Cardiac septum (tissue), 1 donor: ENCODE measurements at regions of chr7 and their contacts with region 1.

Region 1: GRCh38 chr7:127585044-127585953 is at the start of gene GCC1:
- DNase-seq: peak; percentile 96
- total RNA-seq, gene GCC1: 6.8 TPM

Region 2: DNA sequence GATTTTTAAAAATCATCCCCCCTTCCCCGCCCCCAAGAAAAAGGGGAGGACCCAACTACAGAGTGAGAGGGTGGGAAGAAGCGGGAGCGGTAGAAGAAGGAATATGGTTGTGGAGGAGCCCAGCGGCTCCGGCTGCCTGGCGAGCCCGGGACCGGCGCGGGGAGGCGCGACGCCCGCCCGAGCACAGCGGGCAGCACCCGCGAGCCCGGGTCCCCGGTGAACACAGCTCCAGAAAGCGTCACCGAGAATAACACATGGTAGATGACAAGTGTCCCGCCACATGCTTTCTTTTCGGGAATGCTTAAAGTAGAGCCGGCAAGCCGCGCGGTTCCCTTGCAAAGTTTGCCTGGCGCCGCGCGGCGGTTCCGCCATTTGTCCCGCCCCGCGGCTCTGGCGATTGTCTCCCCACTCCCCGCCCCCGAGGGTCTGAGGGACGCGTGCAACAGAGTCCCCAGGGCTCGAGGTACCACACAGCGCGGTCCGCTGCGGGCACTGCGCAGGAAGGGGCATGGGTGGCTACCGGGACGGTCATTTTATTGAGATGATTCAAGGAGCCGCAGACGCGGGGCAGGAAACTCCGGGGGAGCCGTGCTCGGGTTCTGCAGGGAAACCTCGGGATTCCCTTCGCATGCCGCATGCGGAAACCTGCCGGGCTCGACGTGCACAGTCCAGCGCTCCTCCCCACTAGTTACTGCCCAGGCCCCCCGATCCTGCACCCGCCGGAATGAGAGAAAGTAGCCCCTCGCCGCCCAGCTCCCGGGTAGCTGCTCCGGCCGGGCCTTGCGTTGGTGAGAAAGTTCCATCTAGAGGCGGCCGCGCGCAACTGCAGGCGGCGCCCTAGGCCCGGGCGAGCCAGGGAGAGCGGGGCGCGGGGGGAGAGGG is 331.8 kb before region 1 on chr7:
- intact Hi-C with region 1: loop called (anchors 5 kb)
- DNase-seq: peak; percentile 77

Region 3: DNA sequence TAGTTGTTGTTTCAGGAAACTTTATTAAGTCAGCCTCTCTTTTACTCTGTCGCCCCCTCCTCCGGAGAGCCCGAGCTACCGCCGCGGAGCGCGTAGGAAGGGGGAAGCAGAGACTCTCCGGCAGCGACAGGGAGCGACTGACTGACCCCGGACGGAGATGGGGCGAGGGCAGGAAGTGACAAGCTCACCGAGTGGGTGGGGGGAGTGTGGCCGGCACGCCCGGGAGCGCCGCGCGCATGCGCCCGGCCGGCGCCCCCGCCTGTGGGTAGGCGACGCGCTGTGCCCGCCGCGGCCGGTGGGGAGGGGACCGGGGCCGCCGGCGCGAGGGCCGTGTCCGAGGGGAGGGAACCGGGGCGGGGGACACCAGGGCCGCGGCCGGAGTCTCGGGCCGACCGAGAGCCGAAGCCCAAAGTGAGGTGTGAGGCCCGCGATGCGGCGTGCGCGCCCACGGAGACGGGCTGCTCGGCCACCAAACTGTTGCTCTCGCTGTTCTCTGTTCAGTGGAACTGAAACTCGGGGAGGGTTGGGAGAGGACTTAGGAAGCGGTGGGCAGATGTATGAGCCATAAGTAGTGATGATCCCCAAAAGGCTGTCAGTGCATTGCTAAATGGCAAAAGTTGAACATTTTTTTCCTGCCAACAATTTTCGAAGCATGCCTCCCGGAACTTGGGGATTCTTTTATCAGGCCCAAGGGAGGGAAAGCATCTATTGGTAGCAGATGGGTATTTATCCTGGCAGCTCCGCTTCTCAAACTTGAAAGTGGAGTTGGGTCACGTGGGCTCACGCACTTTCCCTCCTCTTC is 192.5 kb before region 1 on chr7 and contains the start of gene ZNF800:
- intact Hi-C with region 1: loop called (anchors 5 kb)
- DNase-seq: peak; percentile 97
- total RNA-seq, gene ZNF800: 26.3 TPM

Region 4: DNA sequence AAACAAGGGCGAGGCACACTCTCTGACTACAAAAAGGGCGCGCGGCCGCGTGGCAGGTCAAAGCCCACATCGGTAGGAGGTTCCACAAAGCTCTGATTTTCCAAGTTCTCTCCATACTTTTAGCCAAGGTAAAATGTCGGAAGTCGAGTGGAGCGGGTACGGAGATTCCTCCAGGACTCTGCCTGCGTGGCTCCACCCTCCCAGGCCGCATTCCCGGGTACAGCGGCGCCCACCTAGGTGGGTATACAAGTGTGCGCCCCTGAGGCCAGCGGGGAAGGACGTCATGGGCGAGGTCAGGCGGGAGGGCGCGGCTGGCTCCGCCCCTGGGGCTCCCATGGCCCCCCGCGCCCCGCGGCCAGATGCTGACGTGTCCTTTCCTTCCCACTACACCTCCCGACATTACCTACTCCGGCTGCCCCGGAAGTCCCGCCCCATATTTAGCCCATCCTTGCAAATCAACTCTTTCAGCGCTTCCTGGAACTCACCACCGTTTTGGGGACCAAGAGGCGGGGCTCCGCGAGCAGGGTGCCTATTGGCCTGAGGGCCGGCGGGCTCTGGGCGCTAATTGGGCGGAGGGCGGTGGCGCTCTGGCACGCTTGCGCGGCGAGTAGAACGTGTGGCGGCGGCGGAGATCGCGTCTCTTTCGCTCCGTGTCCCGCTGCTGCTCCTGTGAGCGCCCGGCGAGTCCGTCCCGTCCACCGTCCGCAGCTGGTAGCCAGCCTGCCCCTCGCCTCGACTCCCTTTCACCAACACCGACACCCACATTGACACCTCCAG is 66.4 kb after region 1 on chr7 and contains the start of gene SND1:
- intact Hi-C with region 1: loop called (anchors 2 kb)
- DNase-seq: peak; percentile 100
- total RNA-seq, gene SND1: 66.7 TPM

Region 5: DNA sequence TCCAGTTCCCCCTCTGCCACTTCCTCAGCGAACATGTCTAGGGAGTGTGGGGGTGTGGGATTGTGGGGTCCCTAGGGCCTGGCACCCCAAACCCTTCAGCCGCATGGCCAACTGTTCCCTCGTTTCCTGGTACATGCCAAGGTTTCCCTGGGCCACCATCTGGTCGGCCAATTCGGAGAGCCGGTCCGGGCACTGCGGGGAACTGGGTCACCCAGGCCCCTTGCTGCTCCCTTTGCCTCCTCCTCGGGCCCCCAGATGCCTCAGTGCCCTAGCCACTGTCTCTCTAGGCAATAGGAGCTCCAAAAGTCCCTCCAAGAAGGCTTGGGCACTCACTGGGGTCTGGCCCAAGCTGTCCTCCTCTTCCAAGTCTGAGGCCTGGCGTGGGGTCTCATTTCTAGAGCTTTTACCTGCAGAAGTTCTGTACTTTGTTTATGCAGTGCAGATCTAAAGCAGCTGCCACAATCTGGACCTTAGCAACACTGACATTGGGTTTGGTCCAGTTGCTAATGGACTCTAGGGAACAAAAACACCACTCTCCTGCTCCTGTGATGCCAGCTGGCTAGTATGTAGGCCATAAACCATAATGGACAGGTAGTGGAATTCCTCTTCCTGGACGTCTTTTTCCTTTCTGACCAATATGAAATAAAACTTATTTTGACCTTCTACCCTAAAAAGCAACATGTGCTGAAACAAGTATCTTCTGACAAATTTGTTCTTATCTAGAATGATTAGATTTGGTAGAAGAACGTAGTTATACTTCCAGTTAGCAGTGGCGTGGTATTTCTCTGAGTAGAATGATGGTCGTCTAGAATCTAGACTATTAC is 273.0 kb after region 1 on chr7:
- intact Hi-C with region 1: no loop called
- DNase-seq: no peak

Region 6: DNA sequence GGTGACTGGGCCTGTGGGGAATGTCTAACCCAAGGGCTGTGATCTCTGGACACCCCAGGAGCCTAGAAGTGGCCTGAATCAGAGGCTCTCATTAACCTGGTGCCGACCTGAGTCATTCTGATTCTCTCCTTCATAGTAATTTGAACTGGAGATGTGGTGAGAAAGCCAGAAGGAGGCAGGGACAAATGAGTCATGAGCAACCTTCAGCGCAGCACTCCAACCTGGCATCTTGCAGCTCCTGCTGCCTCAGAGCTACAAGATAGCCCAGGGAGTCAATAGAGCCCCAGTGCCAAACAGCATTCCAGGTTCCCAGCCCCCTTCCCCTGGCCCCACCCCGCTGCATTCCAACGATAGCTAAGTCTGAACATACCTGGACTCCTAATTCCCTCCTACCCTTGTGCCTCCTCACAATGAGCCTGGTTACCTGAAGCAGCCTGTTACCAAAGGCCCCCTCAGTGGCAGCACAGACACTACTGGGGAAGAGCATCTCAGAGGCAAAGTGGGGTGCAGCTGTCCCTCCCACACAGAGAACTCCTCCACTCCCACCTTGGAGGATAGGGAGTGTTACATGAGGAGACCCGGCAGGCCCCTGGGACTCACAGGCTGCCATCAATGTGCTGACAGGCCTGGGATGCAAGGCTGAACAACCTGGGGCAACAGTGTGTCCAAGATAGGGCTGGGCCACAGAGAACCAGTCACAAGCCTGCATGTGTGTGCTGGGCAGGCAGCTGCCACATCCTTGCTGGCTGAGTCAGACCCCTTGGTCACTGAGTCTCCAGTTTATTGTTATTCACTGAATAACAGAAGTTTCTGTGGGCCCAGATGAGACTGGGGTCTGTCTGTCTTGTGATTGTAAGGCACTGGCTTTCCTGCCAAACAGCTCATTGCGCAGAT is 579.0 kb after region 1 on chr7:
- intact Hi-C with region 1: no loop called
- DNase-seq: no peak